ENCODE measurements at regions of chr7 and their contacts with region 1.

Region 1: DNA sequence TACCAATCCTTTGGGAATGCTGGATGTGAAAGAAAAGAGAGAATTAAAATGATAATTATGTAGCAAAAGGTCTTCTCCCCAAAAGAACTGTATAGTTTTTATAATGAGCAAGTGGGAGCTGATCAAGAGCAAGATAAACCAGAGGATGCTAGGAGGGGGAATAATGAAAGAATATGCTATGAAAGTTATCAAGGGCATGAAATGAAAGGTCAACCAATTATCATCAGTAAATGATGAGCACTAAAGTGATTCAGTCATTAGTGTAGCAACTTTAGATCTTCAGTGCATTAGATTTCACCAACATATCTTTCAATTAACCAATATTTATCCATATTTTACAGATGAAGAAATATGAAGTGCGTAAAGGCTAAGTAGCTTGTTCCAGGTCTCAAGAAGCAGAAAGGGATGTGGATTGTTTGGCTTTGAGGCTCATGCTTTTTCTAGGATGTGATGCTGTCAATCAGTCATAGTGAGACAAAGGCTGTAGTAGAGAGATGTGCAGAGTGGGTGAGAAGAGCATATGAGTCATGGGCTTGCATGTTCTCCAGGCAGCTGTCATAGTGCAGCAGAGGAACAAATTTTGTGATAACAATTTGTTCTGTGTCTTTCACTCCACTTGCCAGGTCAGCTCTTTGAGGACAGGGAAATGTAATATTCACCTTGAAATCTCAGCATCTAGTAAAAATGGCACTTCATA is 5.7 kb upstream of the OR2F2 start:
- DNase-seq: peak; percentile 25
- H3K4me3 Mint-ChIP-seq: no peak overlapping the region
- H3K27ac Mint-ChIP-seq: no peak overlapping the region
- H3K4me1 Mint-ChIP-seq: peaks cover 8% of the 10 kb centered on the region
- H3K27me3 Mint-ChIP-seq: no peaks in the 10 kb centered on the region

Region 2: GRCh38 chr7:143876206-143876605 is 53.2 kb before region 1 on chr7:
- CTCF ChIA-PET with region 1: no interaction called
- POLR2A ChIA-PET with region 1: no interaction called
- intact Hi-C with region 1: no loop called
- DNase-seq: no peak
- H3K4me3 Mint-ChIP-seq: no peak overlapping the region
- H3K27ac Mint-ChIP-seq: no peak overlapping the region
- H3K4me1 Mint-ChIP-seq: no peaks in the 10 kb centered on the region
- H3K27me3 Mint-ChIP-seq: no peaks in the 10 kb centered on the region

Region 3: GRCh38 chr7:143901668-143902331 is 27.6 kb before region 1 on chr7 and contains the start of gene TCAF1:
- CTCF ChIA-PET with region 1: interaction called, 3 read pairs
- POLR2A ChIA-PET with region 1: interaction called, 3 read pairs
- intact Hi-C with region 1: loop called (anchors 1 kb)
- DNase-seq: peak; percentile 95
- H3K4me3 Mint-ChIP-seq: peak within 1 kb of the TSS; percentile 86
- H3K27ac Mint-ChIP-seq: peak within 1 kb of the TSS; percentile 80
- H3K4me1 Mint-ChIP-seq: peaks cover 25% of the 10 kb centered on the region
- H3K27me3 Mint-ChIP-seq: no peaks in the 10 kb centered on the region
- total RNA-seq, gene TCAF1: 25.8 to 26.1 TPM